Gastrocnemius medialis (tissue), 4 donors: ENCODE measurements at regions of chr2 and their contacts with region 1.

Region 1: GRCh38 chr2:162301151-162301804 is 17.2 kb downstream of the IFIH1 start:
- DNase-seq: peak in 1 of 2 donors; percentile 15
- ATAC-seq: peak in 1 of 2 donors; percentile 72
- H3K4me3 ChIP-seq: no peak overlapping the region
- H3K27ac ChIP-seq: no peak overlapping the region
- H3K4me1 ChIP-seq: no peaks in the 10 kb centered on the region
- H3K27me3 ChIP-seq: no peaks in the 10 kb centered on the region
- CTCF ChIP-seq: peak; percentile 51 to 85 (median 64)
- POLR2A ChIP-seq: no peak

Region 2: GRCh38 chr2:161552015-161552414 is 749.3 kb before region 1 on chr2:
- in situ Hi-C with region 1: no loop called
- intact Hi-C with region 1: no loop called
- DNase-seq: no peak
- ATAC-seq: no peak
- H3K4me3 ChIP-seq: no peak overlapping the region
- H3K27ac ChIP-seq: no peak overlapping the region
- H3K4me1 ChIP-seq: no peaks in the 10 kb centered on the region
- H3K27me3 ChIP-seq: no peaks in the 10 kb centered on the region
- CTCF ChIP-seq: no peak
- POLR2A ChIP-seq: no peak

Region 3: GRCh38 chr2:162007447-162008040 is 293.7 kb before region 1 on chr2:
- in situ Hi-C with region 1: loop called in 2 of 4 experiments (anchors 10 to 25 kb)
- intact Hi-C with region 1: no loop called
- DNase-seq: no peak
- ATAC-seq: no peak
- H3K4me3 ChIP-seq: no peak overlapping the region
- H3K27ac ChIP-seq: no peak overlapping the region
- H3K4me1 ChIP-seq: no peaks in the 10 kb centered on the region
- H3K27me3 ChIP-seq: no peaks in the 10 kb centered on the region
- CTCF ChIP-seq: peak in 4 of 5 experiments; percentile 14 to 66 (median 56)
- POLR2A ChIP-seq: no peak

Region 4: DNA sequence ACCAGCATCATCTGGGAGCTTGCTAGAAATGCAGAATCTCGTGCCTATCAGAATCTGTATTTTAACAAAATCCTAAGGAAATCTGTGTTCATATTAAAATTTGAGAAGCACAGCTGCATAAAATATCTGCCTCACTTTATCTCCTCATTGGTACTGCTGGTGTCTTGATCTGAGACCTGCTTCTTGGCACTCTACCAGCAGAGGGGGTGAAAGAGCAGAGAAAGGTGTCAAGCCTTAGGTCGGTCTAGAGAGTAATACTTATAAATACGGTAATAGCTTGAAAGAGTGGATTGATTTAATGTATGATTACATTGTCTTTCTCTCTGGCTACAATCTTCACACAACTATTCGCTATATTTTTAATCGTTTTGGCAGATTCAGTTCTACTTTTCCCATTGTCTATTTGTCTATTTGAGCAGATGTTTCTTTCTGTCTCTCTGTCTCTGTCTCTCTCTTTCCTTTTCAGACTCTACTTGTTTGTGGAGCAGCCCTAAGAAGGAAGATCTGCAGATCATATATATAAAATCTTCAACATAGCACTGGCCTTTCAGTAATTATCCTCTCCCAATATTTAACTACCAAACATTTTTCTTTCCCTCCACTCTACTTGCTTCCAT is 147.6 kb before region 1 on chr2:
- in situ Hi-C with region 1: loop called in 1 of 4 experiments (anchors 10 kb)
- intact Hi-C with region 1: loop called (anchors 10 kb)
- DNase-seq: peak in 1 of 2 donors; percentile 6
- ATAC-seq: no peak
- H3K4me3 ChIP-seq: no peak overlapping the region
- H3K27ac ChIP-seq: no peak overlapping the region
- H3K4me1 ChIP-seq: no peaks in the 10 kb centered on the region
- H3K27me3 ChIP-seq: no peaks in the 10 kb centered on the region
- CTCF ChIP-seq: no peak
- POLR2A ChIP-seq: no peak

Region 5: DNA sequence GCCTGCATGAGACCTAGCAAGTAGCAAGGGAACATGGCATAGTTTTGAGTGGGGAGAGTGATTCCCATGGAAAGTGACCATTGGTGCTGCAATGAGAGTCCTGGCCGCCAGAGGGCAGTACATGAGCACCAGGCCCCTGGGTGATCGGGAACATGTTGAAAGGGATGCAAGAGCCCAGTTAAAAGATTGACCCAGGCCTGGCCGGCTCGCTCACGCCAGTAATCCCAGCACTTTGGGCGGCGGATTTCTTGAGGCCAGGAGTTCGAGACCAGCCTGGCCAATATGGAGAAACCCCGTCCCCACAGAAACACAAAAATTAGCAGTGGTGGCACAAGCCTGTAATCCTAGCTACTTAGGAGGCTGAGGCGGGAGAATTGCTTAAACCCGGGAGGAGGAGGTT is 80.2 kb before region 1 on chr2:
- in situ Hi-C with region 1: loop called in 3 of 4 experiments (anchors 5 to 10 kb)
- intact Hi-C with region 1: loop called (anchors 1 kb)
- DNase-seq: peak; percentile 19 to 47
- ATAC-seq: peak in 1 of 2 donors; percentile 68
- H3K4me3 ChIP-seq: no peak overlapping the region
- H3K27ac ChIP-seq: no peak overlapping the region
- H3K4me1 ChIP-seq: no peaks in the 10 kb centered on the region
- H3K27me3 ChIP-seq: no peaks in the 10 kb centered on the region
- CTCF ChIP-seq: peak; percentile 39 to 73 (median 70)
- POLR2A ChIP-seq: no peak

Region 6: DNA sequence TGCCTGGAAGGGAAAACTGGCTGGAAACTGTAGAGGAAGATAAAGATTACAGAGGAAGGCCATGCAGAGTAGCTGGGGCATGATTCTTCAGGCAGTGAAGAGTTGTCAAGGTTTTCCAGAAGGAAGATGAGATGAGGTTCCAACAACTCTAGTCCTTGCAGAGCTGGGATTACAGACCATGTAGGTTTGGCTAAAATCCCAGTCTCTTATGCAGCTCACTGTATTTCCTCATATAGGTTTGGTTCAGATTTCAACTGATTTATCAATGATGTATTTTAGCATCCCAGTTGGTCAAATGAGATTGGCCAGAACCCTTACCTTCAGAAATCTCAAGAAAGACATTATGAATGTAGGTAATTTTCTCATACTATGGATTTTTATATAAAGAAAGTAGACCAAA is 74.4 kb before region 1 on chr2:
- in situ Hi-C with region 1: loop called in 3 of 4 experiments (anchors 5 to 10 kb)
- intact Hi-C with region 1: no loop called
- DNase-seq: no peak
- ATAC-seq: no peak
- H3K4me3 ChIP-seq: no peak overlapping the region
- H3K27ac ChIP-seq: no peak overlapping the region
- H3K4me1 ChIP-seq: no peaks in the 10 kb centered on the region
- H3K27me3 ChIP-seq: no peaks in the 10 kb centered on the region
- CTCF ChIP-seq: no peak
- POLR2A ChIP-seq: no peak

Region 7: DNA sequence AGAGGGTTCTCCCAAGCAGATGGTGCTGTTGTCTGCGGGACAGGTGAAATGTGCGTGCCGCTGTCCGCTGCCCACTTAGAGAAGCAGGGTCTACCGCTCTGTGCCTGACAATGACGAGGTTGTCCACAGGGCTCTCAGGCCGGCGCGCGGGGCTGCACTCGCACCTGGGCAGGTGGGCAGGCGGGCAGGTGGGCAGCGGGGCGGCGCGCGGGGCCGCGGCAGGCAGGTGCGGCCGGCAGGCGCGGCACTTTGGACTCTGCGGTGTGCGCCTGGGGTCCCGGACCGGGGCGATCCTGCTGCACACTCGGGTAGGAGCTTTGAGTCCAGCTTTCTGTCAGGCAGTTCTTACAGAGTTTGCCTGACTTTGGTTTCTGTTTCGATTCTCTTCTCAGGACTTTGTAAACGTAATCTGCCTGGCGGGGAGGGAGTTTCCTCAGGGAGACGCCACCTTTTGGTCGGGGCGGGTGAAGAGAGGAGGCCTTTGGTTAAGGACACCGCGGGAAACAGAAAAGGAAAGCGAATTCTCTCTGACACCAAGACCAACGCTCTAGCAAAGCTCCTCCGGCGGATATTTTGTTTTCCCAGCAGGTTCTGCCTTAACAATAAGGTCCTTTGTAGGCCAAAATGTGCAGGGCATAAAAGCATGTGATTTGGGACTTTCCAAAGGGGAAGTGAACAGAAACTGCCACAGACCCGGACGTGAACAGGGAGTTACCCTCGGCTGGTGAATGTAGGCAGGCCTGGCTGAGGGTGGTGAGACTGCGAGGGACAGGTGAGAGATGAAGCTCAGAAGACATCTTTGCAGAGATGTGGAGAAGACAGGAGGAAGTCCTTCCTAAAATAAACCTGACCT is 17.3 kb after region 1 on chr2 and contains the start of gene IFIH1:
- in situ Hi-C with region 1: no loop called
- intact Hi-C with region 1: loop called (anchors 2 kb)
- DNase-seq: peak; percentile 48 to 75
- ATAC-seq: peak; percentile 91 to 99
- H3K4me3 ChIP-seq: peak within 1 kb of the TSS; percentile 62 to 73 (median 70)
- H3K27ac ChIP-seq: peak within 1 kb of the TSS; percentile 66 to 80 (median 76)
- H3K4me1 ChIP-seq: no peaks in the 10 kb centered on the region
- H3K27me3 ChIP-seq: no peaks in the 10 kb centered on the region
- CTCF ChIP-seq: peak in 2 of 5 experiments; percentile 10 to 35
- POLR2A ChIP-seq: peak; percentile 8 to 51
- total RNA-seq, gene IFIH1: 0.97 to 5.4 (median 1.7) TPM

Region 8: GRCh38 chr2:162390801-162391200 is 89.5 kb after region 1 on chr2:
- in situ Hi-C with region 1: no loop called
- intact Hi-C with region 1: no loop called
- DNase-seq: no peak
- ATAC-seq: no peak
- H3K4me3 ChIP-seq: no peak overlapping the region
- H3K27ac ChIP-seq: no peak overlapping the region
- H3K4me1 ChIP-seq: no peaks in the 10 kb centered on the region
- H3K27me3 ChIP-seq: no peaks in the 10 kb centered on the region
- CTCF ChIP-seq: no peak
- POLR2A ChIP-seq: no peak